IMR-90 (cell line): ENCODE measurements at regions of chr5 and their contacts with region 1.

Region 1: DNA sequence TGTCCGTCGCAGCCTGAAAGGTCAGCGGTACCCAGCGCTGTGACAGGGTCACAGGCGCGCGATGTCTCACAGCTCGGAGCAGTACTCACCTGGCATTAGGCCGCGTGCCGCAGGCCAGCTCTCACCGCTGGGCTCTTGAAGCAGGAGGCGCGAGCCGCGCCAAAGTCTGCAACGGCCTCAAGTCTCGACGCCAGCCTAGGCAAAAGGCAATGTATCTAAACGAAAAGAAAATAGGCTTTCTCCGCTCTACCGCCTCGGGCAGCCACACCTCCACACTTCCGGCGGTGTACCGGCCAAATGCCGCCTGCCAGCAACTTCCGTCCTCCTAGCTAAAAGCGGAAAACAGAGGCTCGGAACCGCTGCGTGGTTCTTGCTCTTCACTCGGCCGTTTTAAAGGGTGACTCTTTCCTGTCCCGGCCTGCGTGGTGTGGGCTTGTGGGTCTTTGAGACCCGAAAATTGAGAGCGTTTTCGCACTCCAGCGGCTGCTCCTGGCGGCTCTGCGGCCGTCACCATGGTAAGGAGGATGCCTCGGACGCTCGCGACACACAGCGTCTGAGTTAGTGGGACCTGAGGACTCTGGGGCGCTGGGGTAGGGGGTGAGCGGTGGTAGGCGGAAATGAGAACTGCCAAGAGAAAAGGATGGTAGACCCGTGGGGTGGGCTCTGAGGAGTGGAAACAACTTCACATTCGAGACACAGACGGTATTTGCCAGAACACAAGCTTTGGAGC is at the starts of genes GFM2 and NSA2:
- DNase-seq: peak; percentile 94
- ATAC-seq: peak; percentile 94
- H3K4me3 ChIP-seq: peak within 1 kb of the TSS; percentile 82
- H3K27ac ChIP-seq: peak within 1 kb of the TSS; percentile 88
- H3K4me1 ChIP-seq: peaks cover 7% of the 10 kb centered on the region
- H3K27me3 ChIP-seq: no peaks in the 10 kb centered on the region
- CTCF ChIP-seq: no peak
- POLR2A ChIP-seq: peak; percentile 61
- RAD21 ChIP-seq: no peak
- total RNA-seq, gene GFM2: 45.7 and 61.4 TPM in 2 replicates
- total RNA-seq, gene NSA2: 5.4 and 25.6 TPM in 2 replicates

Region 2: GRCh38 chr5:74185599-74185998 is 581.4 kb before region 1 on chr5:
- CTCF ChIA-PET with region 1: no interaction called
- POLR2A ChIA-PET with region 1: no interaction called
- dilution Hi-C with region 1: no loop called
- in situ Hi-C with region 1: no loop called
- intact Hi-C with region 1: no loop called
- DNase-seq: no peak
- ATAC-seq: no peak
- H3K4me3 ChIP-seq: no peak overlapping the region
- H3K27ac ChIP-seq: no peak overlapping the region
- H3K4me1 ChIP-seq: no peaks in the 10 kb centered on the region
- H3K27me3 ChIP-seq: peaks cover 2% of the 10 kb centered on the region; the same call in 1 of the 2 replicates
- CTCF ChIP-seq: no peak
- POLR2A ChIP-seq: no peak
- RAD21 ChIP-seq: no peak

Region 3: GRCh38 chr5:74717596-74717995 is 49.4 kb before region 1 on chr5:
- CTCF ChIA-PET with region 1: no interaction called
- POLR2A ChIA-PET with region 1: no interaction called
- dilution Hi-C with region 1: no loop called
- in situ Hi-C with region 1: no loop called
- intact Hi-C with region 1: no loop called
- DNase-seq: no peak
- ATAC-seq: no peak
- H3K4me3 ChIP-seq: no peak overlapping the region
- H3K27ac ChIP-seq: no peak overlapping the region
- H3K4me1 ChIP-seq: no peaks in the 10 kb centered on the region
- H3K27me3 ChIP-seq: no peaks in the 10 kb centered on the region
- CTCF ChIP-seq: no peak
- POLR2A ChIP-seq: no peak
- RAD21 ChIP-seq: no peak

Region 4: DNA sequence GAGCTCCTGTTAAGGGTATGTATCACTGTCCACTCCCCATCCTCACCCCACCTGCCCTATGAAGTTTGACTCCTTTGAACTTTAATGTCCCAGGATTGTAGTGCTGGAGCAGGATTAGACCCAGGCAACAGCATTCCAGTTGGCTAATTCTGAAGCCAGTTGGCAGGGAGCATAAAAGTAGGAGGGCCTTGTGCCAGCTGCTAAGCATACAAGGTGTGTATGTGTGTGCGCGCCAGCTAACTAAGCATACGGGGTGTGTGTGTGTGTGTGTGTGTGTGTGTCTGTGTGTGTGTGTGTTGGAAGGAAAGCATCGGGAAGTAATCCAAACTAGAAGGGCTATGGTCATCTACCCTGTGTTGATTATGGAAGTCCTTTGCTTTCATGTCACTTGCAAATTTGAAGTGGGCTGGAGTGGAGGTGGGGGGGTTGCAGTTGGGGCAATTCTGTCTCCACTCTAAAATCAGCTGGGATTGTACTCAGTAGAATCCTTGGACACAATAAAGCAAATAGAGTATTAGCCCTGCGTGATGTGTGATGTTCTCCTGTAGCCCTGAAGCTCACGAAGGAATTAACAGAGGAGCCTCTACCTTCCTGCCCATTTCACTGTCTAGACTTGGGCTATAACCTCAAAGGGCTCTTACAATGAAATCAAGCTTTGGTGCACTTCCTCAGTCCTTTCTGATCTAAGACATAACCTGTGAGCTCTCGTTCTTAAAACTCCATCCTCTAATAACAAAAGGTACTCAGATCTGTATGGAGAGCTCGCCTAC is 596.9 kb after region 1 on chr5:
- CTCF ChIA-PET with region 1: no interaction called
- POLR2A ChIA-PET with region 1: no interaction called
- dilution Hi-C with region 1: no loop called
- in situ Hi-C with region 1: loop called (anchors 25 kb)
- intact Hi-C with region 1: no loop called
- DNase-seq: no peak
- ATAC-seq: no peak
- H3K4me3 ChIP-seq: no peak overlapping the region
- H3K27ac ChIP-seq: no peak overlapping the region
- H3K4me1 ChIP-seq: peaks cover 5% of the 10 kb centered on the region
- H3K27me3 ChIP-seq: no peaks in the 10 kb centered on the region
- CTCF ChIP-seq: no peak
- POLR2A ChIP-seq: no peak
- RAD21 ChIP-seq: no peak